A549 (cell line): ENCODE measurements at regions of chr19 and their contacts with region 1.

Region 1: GRCh38 chr19:43503501-43504425 is 783 bp downstream of the PHLDB3 start:
- DNase-seq: peak; percentile 94 to 95
- ATAC-seq: peak; percentile 81 to 93
- H3K4me3 ChIP-seq: peak overlapping the region; percentile 68
- H3K27ac ChIP-seq: peak overlapping the region; percentile 76 to 93
- H3K4me1 ChIP-seq: peaks cover 9% of the 10 kb centered on the region; the same call in 2 of the 3 replicates
- CTCF ChIP-seq: peak; percentile 56; the same call in 2 of the 3 replicates
- EP300 ChIP-seq: no peak
- POLR2A ChIP-seq: no peak; the same call in none of the 2 replicates
- RAD21 ChIP-seq: peak; percentile 9 to 46; a peak in 2 of 5 replicates

Region 2: DNA sequence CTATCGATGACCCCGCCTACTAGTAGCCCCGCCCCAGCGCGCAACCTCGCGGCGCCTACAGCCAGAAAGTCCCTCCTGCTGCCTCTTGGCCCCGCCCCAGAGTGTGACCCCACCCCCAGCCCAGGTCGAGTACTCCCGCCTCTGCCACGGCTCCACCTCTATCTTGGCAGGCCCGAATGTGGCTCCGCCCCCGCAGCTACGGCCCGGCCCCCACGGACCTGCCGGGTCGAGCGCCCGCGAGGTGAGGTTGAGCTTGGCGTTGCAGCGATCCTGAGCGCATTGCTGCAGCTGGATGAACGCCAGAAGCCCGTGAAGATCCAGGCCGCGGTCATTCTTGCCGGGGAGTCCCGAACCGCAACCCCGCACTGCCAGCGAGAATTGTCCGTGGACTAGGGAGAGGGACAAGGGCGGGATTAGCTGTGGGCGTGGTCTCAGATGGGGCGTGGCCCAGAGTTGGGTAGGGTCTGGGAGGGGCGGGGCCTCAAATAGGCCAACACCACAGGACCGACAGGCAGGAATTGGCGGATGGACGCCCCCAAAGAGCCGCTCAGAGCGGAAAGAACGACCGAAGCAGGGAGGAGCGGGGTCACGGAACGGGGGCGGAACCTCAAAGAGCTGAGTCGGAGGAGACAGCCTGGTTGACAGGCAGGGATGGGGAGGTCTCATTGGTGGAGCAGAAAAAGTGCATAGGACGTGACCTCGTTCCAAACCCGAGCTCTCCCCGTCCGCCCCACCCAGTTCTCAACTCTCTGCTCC is 40.2 kb before region 1 on chr19:
- CTCF ChIA-PET with region 1: interaction called, 5 read pairs
- POLR2A ChIA-PET with region 1: interaction called, 11 read pairs
- DNase-seq: peak; percentile 97 to 98
- ATAC-seq: peak; percentile 84 to 91
- H3K4me3 ChIP-seq: peak overlapping the region; percentile 62
- H3K27ac ChIP-seq: peak overlapping the region; percentile 52 to 79; a peak in 5 of 6 replicates
- H3K4me1 ChIP-seq: peaks cover 15% of the 10 kb centered on the region
- CTCF ChIP-seq: no peak
- EP300 ChIP-seq: no peak
- POLR2A ChIP-seq: no peak; the same call in 1 of the 2 replicates
- RAD21 ChIP-seq: no peak

Region 3: GRCh38 chr19:43482193-43482592 is 21.6 kb before region 1 on chr19:
- CTCF ChIA-PET with region 1: interaction called, 11 read pairs
- POLR2A ChIA-PET with region 1: no interaction called
- DNase-seq: no peak
- ATAC-seq: no peak; a peak in 2 of 6 replicates
- H3K4me3 ChIP-seq: no peak overlapping the region
- H3K27ac ChIP-seq: no peak overlapping the region
- H3K4me1 ChIP-seq: no peaks in the 10 kb centered on the region
- CTCF ChIP-seq: no peak
- EP300 ChIP-seq: no peak
- POLR2A ChIP-seq: no peak
- RAD21 ChIP-seq: no peak